Dendritic cell treated with granulocyte-macrophage colony-stimulating factor and Interleukin-4, amounts not matched to agents 40 ng/mL and 50 ng/mL, for 4 days (primary cell): ENCODE measurements at regions of chr16 and their contacts with region 1.

Region 1: GRCh38 chr16:1929578-1930337 is 11.5 kb upstream of the HS3ST6 start:
- H3K4me3 Mint-ChIP-seq: peak overlapping the region; percentile 76
- H3K27ac Mint-ChIP-seq: peak overlapping the region; percentile 76
- H3K4me1 Mint-ChIP-seq: peaks cover 5% of the 10 kb centered on the region
- H3K27me3 Mint-ChIP-seq: peaks cover 12% of the 10 kb centered on the region

Region 2: GRCh38 chr16:1772736-1773584 is 156.8 kb before region 1 on chr16 and contains the starts of genes EME2 and MRPS34:
- intact Hi-C with region 1: loop called (anchors 5 kb)
- H3K4me3 Mint-ChIP-seq: peak within 1 kb of the TSS; percentile 90
- H3K27ac Mint-ChIP-seq: peak within 1 kb of the TSS; percentile 85
- H3K4me1 Mint-ChIP-seq: peaks cover 51% of the 10 kb centered on the region
- H3K27me3 Mint-ChIP-seq: no peaks in the 10 kb centered on the region

Region 3: GRCh38 chr16:1863681-1864460 is 65.9 kb before region 1 on chr16:
- intact Hi-C with region 1: loop called (anchors 1 kb)
- H3K4me3 Mint-ChIP-seq: no peak overlapping the region
- H3K27ac Mint-ChIP-seq: no peak overlapping the region
- H3K4me1 Mint-ChIP-seq: no peaks in the 10 kb centered on the region
- H3K27me3 Mint-ChIP-seq: peaks cover 39% of the 10 kb centered on the region